Right ventricle myocardium inferior (tissue), 1 donor: ENCODE measurements at regions of chr4 and their contacts with region 1.

Region 1: GRCh38 chr4:2755837-2756694 is at the start of gene TNIP2:
- DNase-seq: peak; percentile 94
- ATAC-seq: peak; percentile 89
- total RNA-seq, gene TNIP2: 29.6 TPM

Region 2: DNA sequence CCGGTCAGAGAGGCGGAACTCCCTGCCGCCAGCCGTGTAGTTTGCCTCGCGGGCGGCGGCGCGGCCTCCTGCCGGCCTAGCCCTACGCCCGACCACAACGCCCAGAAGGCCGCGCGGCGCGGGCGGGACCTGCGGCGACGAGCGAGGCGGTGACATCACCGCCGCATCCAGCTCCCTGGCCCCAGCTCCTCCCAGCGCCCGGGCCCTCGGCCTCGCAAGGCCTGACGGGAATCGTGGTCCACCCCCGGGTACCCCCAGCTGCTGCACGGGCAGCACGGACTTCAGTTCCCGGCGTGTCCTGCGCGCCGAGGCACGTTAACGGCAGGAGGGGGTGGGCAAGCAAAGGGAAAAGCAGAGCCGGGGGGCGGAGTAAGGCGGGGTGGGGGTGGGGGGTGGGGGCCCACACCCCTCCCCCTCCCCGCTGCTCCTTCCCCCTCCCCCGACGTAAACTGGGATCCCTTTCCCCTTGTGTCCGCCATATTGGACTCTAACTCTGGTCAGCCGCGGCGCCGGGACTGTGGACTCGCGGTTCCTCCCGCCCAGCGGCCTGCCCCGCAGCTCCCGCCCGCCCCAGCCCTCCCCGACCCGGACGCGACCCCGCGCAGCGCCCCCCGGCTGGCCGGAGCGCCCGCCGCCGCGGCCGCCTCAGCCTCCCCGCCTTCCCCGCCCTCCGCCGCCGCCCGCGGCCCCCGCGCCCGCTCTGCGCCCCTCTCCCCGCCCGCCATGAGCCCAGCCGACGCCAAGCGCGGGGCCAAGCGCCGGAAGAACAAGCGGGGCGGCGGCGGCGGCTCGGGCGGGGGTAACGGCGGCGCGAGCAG is 219.7 kb before region 1 on chr4 and contains the start of gene FAM193A:
- intact Hi-C with region 1: no loop called
- DNase-seq: peak; percentile 100
- ATAC-seq: peak; percentile 99
- total RNA-seq, gene FAM193A: 14.9 TPM

Region 3: DNA sequence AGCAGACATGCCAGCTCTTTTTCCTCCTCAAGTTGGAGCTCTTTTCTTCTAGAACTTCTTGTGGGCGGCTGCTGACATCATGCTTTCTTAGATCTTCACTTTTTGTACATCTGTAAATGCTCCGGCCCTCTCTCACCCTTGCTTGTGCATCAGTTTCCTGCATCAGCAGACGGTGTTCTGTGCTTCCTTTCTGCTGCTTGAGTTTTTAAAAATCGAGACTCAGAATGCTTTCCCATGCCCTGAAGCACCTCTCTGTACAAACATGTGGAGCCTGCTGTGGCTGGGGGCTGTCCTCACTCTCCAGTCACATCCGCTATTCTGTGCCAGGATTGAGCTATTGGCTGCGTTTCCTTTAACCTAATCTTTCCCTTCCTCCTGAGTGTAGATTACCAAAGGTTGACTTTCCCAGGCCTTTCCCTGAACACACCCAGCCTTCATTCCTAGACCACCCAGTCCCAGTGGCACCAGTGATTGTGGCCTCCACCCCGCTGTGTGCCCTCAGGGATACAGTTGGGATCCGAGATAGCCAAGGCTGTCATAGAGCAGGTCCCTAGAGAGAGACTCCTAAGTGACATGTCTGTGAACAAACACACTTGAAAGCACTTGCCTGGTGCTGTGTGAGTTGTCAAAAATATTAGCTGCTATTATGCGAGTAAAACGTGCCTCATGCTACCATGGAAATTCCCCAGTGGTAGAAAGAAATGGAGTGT is 41.9 kb before region 1 on chr4:
- intact Hi-C with region 1: loop called (anchors 5 kb)
- DNase-seq: no peak
- ATAC-seq: peak; percentile 77

Region 4: GRCh38 chr4:2843263-2843940 is 87.3 kb after region 1 on chr4 and contains the start of gene ADD1:
- intact Hi-C with region 1: no loop called
- DNase-seq: peak; percentile 94
- ATAC-seq: peak; percentile 99
- total RNA-seq, gene ADD1: 231 TPM